Caco-2 (cell line): ENCODE measurements at regions of chr20 and their contacts with region 1.

Region 1: DNA sequence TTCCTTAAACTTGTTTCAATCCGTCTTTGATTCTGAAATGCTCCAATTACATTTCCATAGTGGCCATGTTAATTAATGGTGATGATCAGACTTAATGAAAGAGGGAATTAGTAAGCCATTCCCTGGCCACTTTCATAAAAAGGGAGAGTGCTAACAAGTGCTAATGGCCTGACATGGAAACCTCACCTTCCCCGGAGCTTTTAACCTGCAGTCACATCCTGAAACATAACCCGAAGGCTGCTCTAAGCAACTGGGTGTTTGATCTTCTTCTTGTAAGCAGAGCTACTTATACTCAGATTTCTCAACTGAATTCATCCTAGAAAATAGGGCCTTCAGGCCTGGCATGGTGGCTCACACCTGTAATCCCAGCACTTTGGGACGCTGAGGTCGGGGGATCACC is 67.1 kb upstream of the ZMYND8 start:
- DNase-seq: no peak
- H3K4me3 ChIP-seq: no peak overlapping the region
- H3K4me3 Mint-ChIP-seq: no peak overlapping the region
- H3K27ac Mint-ChIP-seq: no peak overlapping the region
- H3K4me1 ChIP-seq: no peaks in the 10 kb centered on the region; the same call in 1 of the 2 replicates
- H3K4me1 Mint-ChIP-seq: peaks cover 11% of the 10 kb centered on the region
- H3K27me3 ChIP-seq: no peaks in the 10 kb centered on the region
- H3K27me3 Mint-ChIP-seq: no peaks in the 10 kb centered on the region
- CTCF ChIP-seq: no peak

Region 2: GRCh38 chr20:47515843-47516242 is 92.3 kb after region 1 on chr20:
- CTCF ChIA-PET with region 1: no interaction called
- POLR2A ChIA-PET with region 1: interaction called, 13 read pairs
- intact Hi-C with region 1: no loop called
- DNase-seq: no peak
- H3K4me3 ChIP-seq: no peak overlapping the region
- H3K4me3 Mint-ChIP-seq: no peak overlapping the region
- H3K27ac Mint-ChIP-seq: no peak overlapping the region
- H3K4me1 ChIP-seq: peaks cover 3% of the 10 kb centered on the region; the same call in 1 of the 2 replicates
- H3K4me1 Mint-ChIP-seq: peaks cover 14% of the 10 kb centered on the region
- H3K27me3 ChIP-seq: no peaks in the 10 kb centered on the region
- H3K27me3 Mint-ChIP-seq: no peaks in the 10 kb centered on the region
- CTCF ChIP-seq: no peak